ENCODE measurements at regions of chr15 and their contacts with region 1.

Region 1: GRCh38 chr15:58269455-58270414 is 131.6 kb downstream of the AQP9 start:
- DNase-seq: peak; percentile 63 to 72
- H3K4me3 ChIP-seq: no peak overlapping the region
- H3K4me3 Mint-ChIP-seq: no peak overlapping the region
- H3K27ac Mint-ChIP-seq: peak overlapping the region; percentile 39
- H3K4me1 ChIP-seq: peaks cover 14% of the 10 kb centered on the region
- H3K4me1 Mint-ChIP-seq: peaks cover 17% of the 10 kb centered on the region
- H3K27me3 ChIP-seq: no peaks in the 10 kb centered on the region
- H3K27me3 Mint-ChIP-seq: no peaks in the 10 kb centered on the region
- CTCF ChIP-seq: peak; percentile 73 to 78

Region 2: GRCh38 chr15:58227706-58228543 is 41.8 kb before region 1 on chr15:
- CTCF ChIA-PET with region 1: interaction called, 3 read pairs
- POLR2A ChIA-PET with region 1: no interaction called
- intact Hi-C with region 1: loop called (anchors 5 kb)
- DNase-seq: peak; percentile 61 to 79
- H3K4me3 ChIP-seq: no peak overlapping the region
- H3K4me3 Mint-ChIP-seq: no peak overlapping the region
- H3K27ac Mint-ChIP-seq: no peak overlapping the region
- H3K4me1 ChIP-seq: peaks cover 5% of the 10 kb centered on the region; the same call in 1 of the 2 replicates
- H3K4me1 Mint-ChIP-seq: peaks cover 10% of the 10 kb centered on the region
- H3K27me3 ChIP-seq: no peaks in the 10 kb centered on the region
- H3K27me3 Mint-ChIP-seq: no peaks in the 10 kb centered on the region
- CTCF ChIP-seq: peak; percentile 81 to 85

Region 3: DNA sequence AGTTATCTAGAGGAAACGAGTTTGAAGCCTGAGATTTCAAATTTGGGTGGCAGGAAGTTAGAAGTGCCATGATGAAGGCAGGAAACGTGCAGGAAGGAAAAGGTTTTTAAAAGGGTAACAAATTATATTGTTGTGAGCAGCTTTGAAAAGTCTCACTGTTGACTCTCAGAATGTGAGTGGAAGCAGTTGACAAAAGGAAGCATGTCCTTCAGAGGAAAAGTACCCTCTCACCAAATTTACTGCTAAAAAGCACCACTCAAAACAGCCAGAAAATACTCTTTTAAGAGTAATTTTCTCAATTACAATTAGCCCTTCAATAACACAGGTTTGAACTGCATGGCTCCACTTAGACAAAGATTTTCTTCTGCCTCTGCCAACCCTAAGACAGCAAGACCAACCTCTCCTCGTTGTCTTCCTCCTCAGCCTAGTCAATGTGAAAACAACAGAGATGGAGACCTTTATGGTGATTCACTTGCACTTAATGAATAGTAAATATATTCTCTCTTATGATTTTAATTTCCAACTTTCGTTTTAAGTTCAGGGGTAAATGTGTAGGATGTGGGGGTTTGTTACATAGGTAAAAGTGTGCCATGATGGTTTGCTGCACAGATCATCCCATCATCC is 45.0 kb after region 1 on chr15:
- CTCF ChIA-PET with region 1: no interaction called
- POLR2A ChIA-PET with region 1: no interaction called
- intact Hi-C with region 1: no loop called
- DNase-seq: no peak
- H3K4me3 ChIP-seq: no peak overlapping the region
- H3K4me3 Mint-ChIP-seq: no peak overlapping the region
- H3K27ac Mint-ChIP-seq: no peak overlapping the region
- H3K4me1 ChIP-seq: no peaks in the 10 kb centered on the region
- H3K4me1 Mint-ChIP-seq: no peaks in the 10 kb centered on the region
- H3K27me3 ChIP-seq: no peaks in the 10 kb centered on the region; the same call in 1 of the 2 replicates
- H3K27me3 Mint-ChIP-seq: no peaks in the 10 kb centered on the region
- CTCF ChIP-seq: no peak

Region 4: GRCh38 chr15:58426501-58426900 is 156.8 kb after region 1 on chr15:
- CTCF ChIA-PET with region 1: interaction called, 10 read pairs
- POLR2A ChIA-PET with region 1: no interaction called
- intact Hi-C with region 1: loop called (anchors 5 kb)
- DNase-seq: no peak
- H3K4me3 ChIP-seq: no peak overlapping the region
- H3K4me3 Mint-ChIP-seq: no peak overlapping the region
- H3K27ac Mint-ChIP-seq: no peak overlapping the region
- H3K4me1 ChIP-seq: peaks cover 28% of the 10 kb centered on the region
- H3K4me1 Mint-ChIP-seq: peaks cover 14% of the 10 kb centered on the region
- H3K27me3 ChIP-seq: no peaks in the 10 kb centered on the region
- H3K27me3 Mint-ChIP-seq: no peaks in the 10 kb centered on the region
- CTCF ChIP-seq: no peak

Region 5: GRCh38 chr15:58433597-58434333 is 164.0 kb after region 1 on chr15:
- CTCF ChIA-PET with region 1: no interaction called
- POLR2A ChIA-PET with region 1: no interaction called
- intact Hi-C with region 1: loop called (anchors 5 kb)
- DNase-seq: no peak
- H3K4me3 ChIP-seq: no peak overlapping the region
- H3K4me3 Mint-ChIP-seq: peak overlapping the region; percentile 74
- H3K27ac Mint-ChIP-seq: peak overlapping the region; percentile 77
- H3K4me1 ChIP-seq: peaks cover 55% of the 10 kb centered on the region
- H3K4me1 Mint-ChIP-seq: peaks cover 15% of the 10 kb centered on the region
- H3K27me3 ChIP-seq: no peaks in the 10 kb centered on the region
- H3K27me3 Mint-ChIP-seq: no peaks in the 10 kb centered on the region
- CTCF ChIP-seq: peak in 1 of 2 experiments; percentile 3

Region 6: DNA sequence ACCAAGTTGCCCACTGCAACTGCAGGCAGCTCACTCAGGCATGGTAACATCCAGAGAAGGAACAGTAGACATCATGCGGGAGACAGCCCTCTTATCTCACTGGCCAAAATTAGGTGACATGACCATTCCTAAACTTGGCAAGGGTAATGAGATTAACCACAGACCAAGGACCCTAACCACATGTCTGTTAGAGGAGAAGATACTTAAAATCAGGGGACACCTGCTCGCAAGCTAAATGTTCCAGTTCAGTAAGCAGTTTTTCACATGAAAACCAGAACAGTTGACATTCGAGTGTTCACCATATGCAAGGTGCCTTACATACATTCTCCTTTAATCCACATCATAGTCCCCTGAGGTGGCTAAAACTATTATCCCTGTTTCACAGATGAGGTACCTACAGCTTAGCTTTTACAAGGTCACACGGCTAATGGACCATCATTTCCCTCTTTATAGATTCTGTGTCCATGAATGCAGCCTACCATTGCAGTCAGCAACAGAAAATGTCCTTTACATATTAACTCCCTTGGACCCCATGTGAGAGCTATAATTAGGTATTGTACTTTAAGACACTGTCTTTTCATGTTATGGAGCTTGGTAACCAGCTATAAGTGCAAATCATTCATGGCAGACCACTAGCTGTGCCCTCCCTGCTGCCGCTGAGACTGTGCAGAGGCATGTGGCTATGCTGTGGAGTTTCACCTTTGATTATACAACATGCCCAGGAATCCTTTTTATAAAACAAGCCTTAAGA is 316.1 kb after region 1 on chr15:
- CTCF ChIA-PET with region 1: no interaction called
- POLR2A ChIA-PET with region 1: no interaction called
- intact Hi-C with region 1: loop called (anchors 5 kb)
- DNase-seq: no peak
- H3K4me3 ChIP-seq: no peak overlapping the region
- H3K4me3 Mint-ChIP-seq: no peak overlapping the region
- H3K27ac Mint-ChIP-seq: no peak overlapping the region
- H3K4me1 ChIP-seq: peaks cover 34% of the 10 kb centered on the region
- H3K4me1 Mint-ChIP-seq: peaks cover 19% of the 10 kb centered on the region
- H3K27me3 ChIP-seq: no peaks in the 10 kb centered on the region
- H3K27me3 Mint-ChIP-seq: no peaks in the 10 kb centered on the region
- CTCF ChIP-seq: no peak

Region 7: GRCh38 chr15:58758138-58758537 is 488.4 kb after region 1 on chr15:
- CTCF ChIA-PET with region 1: no interaction called
- POLR2A ChIA-PET with region 1: no interaction called
- intact Hi-C with region 1: loop called (anchors 2 kb)
- DNase-seq: peak in 1 of 2 experiments; percentile 19
- H3K4me3 ChIP-seq: no peak overlapping the region
- H3K4me3 Mint-ChIP-seq: no peak overlapping the region
- H3K27ac Mint-ChIP-seq: no peak overlapping the region
- H3K4me1 ChIP-seq: no peaks in the 10 kb centered on the region
- H3K4me1 Mint-ChIP-seq: no peaks in the 10 kb centered on the region
- H3K27me3 ChIP-seq: no peaks in the 10 kb centered on the region
- H3K27me3 Mint-ChIP-seq: no peaks in the 10 kb centered on the region
- CTCF ChIP-seq: peak in 1 of 2 experiments; percentile 19

Measured in Caco-2 (cell line).